Heart right ventricle (tissue), 16 donors: ENCODE measurements at regions of chr1 and their contacts with region 1.

Region 1: GRCh38 chr1:53485478-53486394 is 26.5 kb downstream of the DMRTB1 start:
- DNase-seq: peak; percentile 70 to 82
- ATAC-seq: peak; percentile 67 to 93 (median 88)
- H3K4me3 ChIP-seq: no peak overlapping the region
- H3K27ac ChIP-seq: no peak overlapping the region
- H3K4me1 ChIP-seq: peaks cover 0 to 6% (median 0%) of the 10 kb centered on the region in 9 donors
- H3K27me3 ChIP-seq: peaks cover 0 to 76% (median 61%) of the 10 kb centered on the region in 7 donors
- CTCF ChIP-seq: peak; percentile 76 to 92 (median 84)

Region 2: GRCh38 chr1:53592521-53592982 is 106.8 kb after region 1 on chr1:
- intact Hi-C with region 1: loop called in 3 of 10 experiments (anchors 10 kb)
- DNase-seq: no peak
- ATAC-seq: peak in 7 of 8 donors; percentile 16 to 61 (median 54)
- H3K4me3 ChIP-seq: no peak overlapping the region
- H3K27ac ChIP-seq: peak overlapping the region in 5 of 10 donors; percentile 43 to 64 (median 50)
- H3K4me1 ChIP-seq: peaks cover 0 to 12% (median 0%) of the 10 kb centered on the region in 9 donors
- H3K27me3 ChIP-seq: peaks cover 0 to 19% (median 0%) of the 10 kb centered on the region in 7 donors
- CTCF ChIP-seq: no peak

Region 3: GRCh38 chr1:53681977-53682685 is 196.4 kb after region 1 on chr1:
- intact Hi-C with region 1: loop called in 7 of 10 experiments (anchors 5 to 10 kb)
- DNase-seq: peak; percentile 14 to 33
- ATAC-seq: peak in 5 of 8 donors; percentile 5 to 35 (median 24)
- H3K4me3 ChIP-seq: no peak overlapping the region
- H3K27ac ChIP-seq: no peak overlapping the region
- H3K4me1 ChIP-seq: peaks cover 2 to 21% (median 6%) of the 10 kb centered on the region in 9 donors
- H3K27me3 ChIP-seq: peaks cover 0 to 67% (median 53%) of the 10 kb centered on the region in 7 donors
- CTCF ChIP-seq: peak in 7 of 9 donors; percentile 25 to 51 (median 38)

Region 4: GRCh38 chr1:53754484-53755312 is 269.0 kb after region 1 on chr1:
- intact Hi-C with region 1: loop called (anchors 1 to 10 kb)
- DNase-seq: peak in 1 of 2 donors; percentile 38
- ATAC-seq: peak in 2 of 8 donors; percentile 56 to 63
- H3K4me3 ChIP-seq: no peak overlapping the region
- H3K27ac ChIP-seq: no peak overlapping the region
- H3K4me1 ChIP-seq: no peaks in the 10 kb centered on the region
- H3K27me3 ChIP-seq: no peaks in the 10 kb centered on the region
- CTCF ChIP-seq: peak; percentile 19 to 80 (median 74)